ENCODE measurements at regions of chr1 and their contacts with region 1.

Region 1: GRCh38 chr1:44002606-44003157 is 11.3 kb downstream of the CCDC24 start:
- DNase-seq: no peak
- H3K4me3 Mint-ChIP-seq: no peak overlapping the region
- H3K27ac Mint-ChIP-seq: no peak overlapping the region
- H3K4me1 Mint-ChIP-seq: peaks cover 8% of the 10 kb centered on the region
- H3K27me3 Mint-ChIP-seq: no peaks in the 10 kb centered on the region

Region 2: GRCh38 chr1:43853161-43853921 is 149.3 kb before region 1 on chr1:
- CTCF ChIA-PET with region 1: no interaction called
- DNase-seq: no peak
- H3K4me3 Mint-ChIP-seq: no peak overlapping the region
- H3K27ac Mint-ChIP-seq: no peak overlapping the region
- H3K4me1 Mint-ChIP-seq: no peaks in the 10 kb centered on the region
- H3K27me3 Mint-ChIP-seq: no peaks in the 10 kb centered on the region

Region 3: GRCh38 chr1:43902058-43902831 is 100.4 kb before region 1 on chr1:
- CTCF ChIA-PET with region 1: no interaction called
- DNase-seq: no peak
- H3K4me3 Mint-ChIP-seq: no peak overlapping the region
- H3K27ac Mint-ChIP-seq: no peak overlapping the region
- H3K4me1 Mint-ChIP-seq: no peaks in the 10 kb centered on the region
- H3K27me3 Mint-ChIP-seq: no peaks in the 10 kb centered on the region

Region 4: GRCh38 chr1:43991476-43992231 is 11.0 kb before region 1 on chr1 and contains the start of gene CCDC24:
- CTCF ChIA-PET with region 1: interaction called, 14 read pairs
- DNase-seq: peak; percentile 87
- H3K4me3 Mint-ChIP-seq: peak within 1 kb of the TSS; percentile 90
- H3K27ac Mint-ChIP-seq: no peak within 1 kb of the TSS
- H3K4me1 Mint-ChIP-seq: peaks cover 23% of the 10 kb centered on the region
- H3K27me3 Mint-ChIP-seq: peaks cover 24% of the 10 kb centered on the region

Region 5: DNA sequence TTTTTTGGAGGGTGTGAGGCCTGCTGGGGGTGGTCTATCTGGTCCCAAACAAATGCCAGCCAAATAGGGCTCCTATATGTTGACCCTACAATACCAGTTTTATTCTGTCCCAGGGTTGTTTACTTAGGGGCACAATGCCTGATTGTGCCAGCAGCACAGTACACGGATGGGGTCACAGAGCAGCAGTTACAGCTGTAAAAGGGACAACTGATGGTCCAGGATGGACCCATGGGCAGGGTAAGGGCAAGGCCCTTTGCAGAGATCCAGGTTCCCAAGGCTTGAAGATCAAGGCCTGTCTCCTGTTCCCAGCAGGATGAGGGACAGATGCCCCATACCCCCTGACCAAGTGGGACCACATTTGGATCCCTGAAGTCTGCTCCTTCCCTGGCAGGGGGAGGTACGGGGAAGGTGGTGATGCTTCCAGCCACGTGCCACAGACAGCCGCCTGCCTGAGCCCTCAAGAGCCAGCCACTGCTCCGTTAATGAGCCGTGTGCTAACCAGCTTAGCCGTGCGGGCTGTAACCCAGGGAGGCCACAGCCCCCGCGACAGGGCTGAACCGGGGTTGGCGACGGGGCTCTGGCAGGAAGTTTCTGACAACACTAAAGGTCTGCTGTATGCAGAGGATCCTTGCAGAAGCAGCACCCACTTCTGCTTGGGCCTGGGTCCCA is 10.4 kb after region 1 on chr1:
- CTCF ChIA-PET with region 1: interaction called, 17 read pairs
- DNase-seq: no peak
- H3K4me3 Mint-ChIP-seq: no peak overlapping the region
- H3K27ac Mint-ChIP-seq: peak overlapping the region; percentile 12
- H3K4me1 Mint-ChIP-seq: peaks cover 5% of the 10 kb centered on the region
- H3K27me3 Mint-ChIP-seq: no peaks in the 10 kb centered on the region

Region 6: DNA sequence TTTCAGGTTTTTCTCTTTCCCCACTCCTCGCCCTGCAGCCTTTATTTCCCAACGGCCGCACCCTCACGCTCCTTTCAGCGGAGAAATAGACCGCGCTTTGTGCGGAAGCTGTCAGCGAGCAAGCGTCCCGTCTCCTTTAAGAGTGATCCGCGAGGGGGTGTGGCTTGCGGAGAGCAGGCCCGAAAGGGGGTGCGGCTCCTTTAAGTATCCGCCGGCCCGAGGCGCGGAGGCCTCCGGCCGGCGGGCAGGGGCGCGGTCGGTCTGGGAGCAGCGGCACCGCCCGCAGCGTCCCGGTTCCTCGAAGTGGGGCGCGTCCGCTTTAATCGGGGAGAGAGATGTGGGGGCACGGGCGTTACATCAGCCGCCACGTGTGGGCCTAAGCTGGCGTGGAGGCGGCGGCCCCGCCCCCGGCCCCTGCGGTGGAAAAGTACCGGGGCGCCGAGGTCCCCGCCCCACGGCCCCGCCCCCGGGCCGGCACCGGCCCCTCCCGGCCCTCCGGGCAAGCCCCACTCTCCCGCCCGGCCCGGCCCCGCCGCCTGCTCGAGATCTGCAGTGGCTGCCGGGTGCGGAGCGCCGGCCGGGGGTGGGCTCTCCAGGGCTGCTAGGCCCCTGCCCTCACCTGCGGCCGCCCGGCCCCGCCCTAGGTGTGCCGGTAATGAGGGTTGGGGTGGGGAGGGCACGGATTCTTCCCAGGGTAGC is 27.4 kb after region 1 on chr1:
- CTCF ChIA-PET with region 1: interaction called, 161 read pairs
- DNase-seq: peak; percentile 92
- H3K4me3 Mint-ChIP-seq: peak overlapping the region; percentile 90
- H3K27ac Mint-ChIP-seq: peak overlapping the region; percentile 93
- H3K4me1 Mint-ChIP-seq: peaks cover 34% of the 10 kb centered on the region
- H3K27me3 Mint-ChIP-seq: peaks cover 16% of the 10 kb centered on the region

Region 7: GRCh38 chr1:44036409-44037139 is 33.9 kb after region 1 on chr1:
- CTCF ChIA-PET with region 1: interaction called, 161 read pairs
- DNase-seq: peak; percentile 79
- H3K4me3 Mint-ChIP-seq: no peak overlapping the region
- H3K27ac Mint-ChIP-seq: no peak overlapping the region
- H3K4me1 Mint-ChIP-seq: peaks cover 12% of the 10 kb centered on the region
- H3K27me3 Mint-ChIP-seq: peaks cover 15% of the 10 kb centered on the region

Region 8: GRCh38 chr1:44049839-44050238 is 47.2 kb after region 1 on chr1:
- CTCF ChIA-PET with region 1: interaction called, 102 read pairs
- DNase-seq: no peak
- H3K4me3 Mint-ChIP-seq: no peak overlapping the region
- H3K27ac Mint-ChIP-seq: no peak overlapping the region
- H3K4me1 Mint-ChIP-seq: peaks cover 14% of the 10 kb centered on the region
- H3K27me3 Mint-ChIP-seq: peaks cover 14% of the 10 kb centered on the region

Measured in activated naive CD4-positive, alpha-beta T cell treated with anti-CD3 and anti-CD28 coated beads, Interleukin-2, amount 10 ng/mL, durations not matched to agents 7 days and 5 days (primary cell).